CD8-positive, alpha-beta T cell (primary cell): ENCODE measurements at regions of chr4 and their contacts with region 1.

Region 1: DNA sequence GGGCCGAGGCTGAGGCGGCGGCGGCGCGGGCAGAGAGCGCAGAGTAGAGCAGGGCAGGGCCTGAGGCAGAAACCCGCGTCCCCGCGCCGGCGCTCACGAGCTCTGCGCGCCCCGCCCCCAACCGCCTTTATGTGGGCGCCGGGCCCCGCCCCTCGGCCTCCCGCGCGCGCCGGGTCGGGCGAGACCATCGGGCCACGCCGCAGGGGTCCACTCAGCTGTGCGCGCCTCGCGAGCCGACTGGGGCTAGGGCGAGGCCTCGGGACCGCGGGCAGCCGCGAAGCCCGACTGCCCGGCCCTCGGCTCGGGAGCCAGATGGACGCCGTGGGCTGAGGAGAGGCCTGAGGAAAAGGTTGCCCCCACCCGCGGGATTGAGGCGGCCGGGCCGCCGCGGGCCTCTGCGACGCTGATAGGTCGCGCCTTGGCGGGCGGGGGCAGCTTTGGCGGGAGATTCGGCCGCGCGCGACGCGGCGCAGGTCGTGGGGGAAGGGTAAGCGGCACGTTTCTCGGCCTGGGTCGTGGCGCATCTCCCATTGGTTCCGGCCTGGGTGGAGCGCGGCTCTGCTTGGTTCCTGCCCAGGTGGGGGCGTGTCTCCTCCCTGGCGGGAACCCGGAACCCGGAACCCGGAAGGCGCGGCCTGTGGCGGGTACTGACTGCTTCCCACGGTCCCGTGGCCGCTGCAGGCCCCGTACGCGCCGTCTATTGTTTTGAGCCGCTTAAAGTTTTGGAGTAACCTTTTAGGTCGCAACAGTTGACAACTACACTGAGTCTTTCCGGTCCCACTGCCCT is at the start of gene SLBP:
- DNase-seq: peak; percentile 96 to 99 (median 99)
- ATAC-seq: peak; percentile 87
- H3K4me3 ChIP-seq: peak within 1 kb of the TSS; percentile 82 to 95
- H3K4me3 Mint-ChIP-seq: peak within 1 kb of the TSS; percentile 94
- H3K27ac ChIP-seq: peak within 1 kb of the TSS; percentile 95 to 97
- H3K27ac Mint-ChIP-seq: peak within 1 kb of the TSS; percentile 94
- H3K4me1 ChIP-seq: peaks cover 42% of the 10 kb centered on the region
- H3K4me1 Mint-ChIP-seq: peaks cover 60% of the 10 kb centered on the region
- H3K27me3 ChIP-seq: no peaks in the 10 kb centered on the region
- H3K27me3 Mint-ChIP-seq: no peaks in the 10 kb centered on the region
- CTCF ChIP-seq: no peak
- total RNA-seq, gene SLBP: 61.2 to 62.6 TPM

Region 2: GRCh38 chr4:560731-561291 is 1151.6 kb before region 1 on chr4:
- CTCF ChIA-PET with region 1: no interaction called
- POLR2A ChIA-PET with region 1: no interaction called
- intact Hi-C with region 1: no loop called
- DNase-seq: no peak
- ATAC-seq: no peak
- H3K4me3 ChIP-seq: no peak overlapping the region
- H3K4me3 Mint-ChIP-seq: no peak overlapping the region
- H3K27ac ChIP-seq: no peak overlapping the region
- H3K27ac Mint-ChIP-seq: no peak overlapping the region
- H3K4me1 ChIP-seq: no peaks in the 10 kb centered on the region
- H3K4me1 Mint-ChIP-seq: no peaks in the 10 kb centered on the region
- H3K27me3 ChIP-seq: no peaks in the 10 kb centered on the region
- H3K27me3 Mint-ChIP-seq: peaks cover 11% of the 10 kb centered on the region
- CTCF ChIP-seq: no peak

Region 3: GRCh38 chr4:973431-974397 is 738.7 kb before region 1 on chr4 and contains the start of gene DGKQ:
- CTCF ChIA-PET with region 1: no interaction called
- POLR2A ChIA-PET with region 1: no interaction called
- intact Hi-C with region 1: loop called in 1 of 2 experiments (anchors 5 kb)
- DNase-seq: peak; percentile 83 to 95 (median 89)
- ATAC-seq: peak; percentile 82
- H3K4me3 ChIP-seq: peak within 1 kb of the TSS; percentile 74 to 77
- H3K4me3 Mint-ChIP-seq: peak within 1 kb of the TSS; percentile 62
- H3K27ac ChIP-seq: peak within 1 kb of the TSS; percentile 56 to 85
- H3K27ac Mint-ChIP-seq: peak within 1 kb of the TSS; percentile 37
- H3K4me1 ChIP-seq: peaks cover 32% of the 10 kb centered on the region
- H3K4me1 Mint-ChIP-seq: peaks cover 17% of the 10 kb centered on the region
- H3K27me3 ChIP-seq: no peaks in the 10 kb centered on the region
- H3K27me3 Mint-ChIP-seq: no peaks in the 10 kb centered on the region
- CTCF ChIP-seq: no peak
- total RNA-seq, gene DGKQ: 28.2 to 29.7 TPM

Region 4: GRCh38 chr4:1579901-1580691 is 132.3 kb before region 1 on chr4:
- CTCF ChIA-PET with region 1: no interaction called
- POLR2A ChIA-PET with region 1: no interaction called
- intact Hi-C with region 1: loop called (anchors 2 kb)
- DNase-seq: peak; percentile 83 to 96 (median 93)
- ATAC-seq: peak; percentile 82
- H3K4me3 ChIP-seq: peak overlapping the region; percentile 70 to 78
- H3K4me3 Mint-ChIP-seq: peak overlapping the region; percentile 79
- H3K27ac ChIP-seq: peak overlapping the region; percentile 66 to 73
- H3K27ac Mint-ChIP-seq: peak overlapping the region; percentile 79
- H3K4me1 ChIP-seq: no peaks in the 10 kb centered on the region
- H3K4me1 Mint-ChIP-seq: peaks cover 11% of the 10 kb centered on the region
- H3K27me3 ChIP-seq: no peaks in the 10 kb centered on the region
- H3K27me3 Mint-ChIP-seq: no peaks in the 10 kb centered on the region
- CTCF ChIP-seq: no peak

Region 5: DNA sequence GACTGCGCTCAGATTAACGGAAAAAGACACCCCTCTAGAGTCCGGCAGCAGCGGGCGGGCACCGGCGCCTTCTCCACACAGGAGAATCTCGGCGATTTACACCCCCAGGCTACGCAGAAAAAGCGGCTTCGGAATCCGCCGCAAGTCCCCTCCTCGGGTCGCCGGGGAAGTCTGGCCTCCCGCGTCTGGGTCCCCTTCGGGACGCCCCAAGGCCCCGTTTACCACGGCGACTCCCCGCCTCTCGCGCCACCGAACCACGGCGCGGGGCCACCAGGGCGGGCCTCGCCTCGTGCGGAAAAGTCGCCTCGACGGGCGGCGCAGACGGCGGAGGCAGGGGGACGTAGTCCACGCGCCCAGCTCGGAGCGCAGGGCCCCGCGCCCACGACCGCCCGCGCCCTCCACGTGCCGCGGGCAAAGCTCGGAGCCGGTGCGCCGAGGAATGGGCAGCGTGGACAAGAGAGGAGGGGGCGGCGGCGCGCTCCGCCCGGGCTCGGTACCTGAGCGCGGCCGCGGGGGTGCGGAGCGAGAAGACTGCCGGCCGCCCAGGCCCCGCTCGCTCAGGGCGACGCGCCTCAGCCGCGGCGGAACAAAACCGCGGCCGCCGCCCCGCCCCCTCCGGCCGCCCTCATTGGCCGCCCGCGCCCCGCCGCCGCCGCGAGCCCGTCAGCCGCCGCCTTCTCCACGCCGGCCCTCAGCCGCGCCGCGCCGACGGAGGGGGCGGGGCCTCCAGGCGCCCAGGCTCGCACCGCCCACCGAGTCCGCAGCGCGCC is 28.5 kb before region 1 on chr4 and contains the start of gene FAM53A:
- CTCF ChIA-PET with region 1: interaction called, 509 read pairs
- POLR2A ChIA-PET with region 1: interaction called, 9 read pairs
- intact Hi-C with region 1: loop called (anchors 1 kb)
- DNase-seq: peak in 7 of 9 experiments; percentile 7 to 95 (median 43)
- ATAC-seq: peak; percentile 94
- H3K4me3 ChIP-seq: peak within 1 kb of the TSS; percentile 42 to 43
- H3K4me3 Mint-ChIP-seq: peak within 1 kb of the TSS; percentile 89
- H3K27ac ChIP-seq: peak within 1 kb of the TSS in 1 of 2 experiments; percentile 4
- H3K27ac Mint-ChIP-seq: peak within 1 kb of the TSS; percentile 81
- H3K4me1 ChIP-seq: no peaks in the 10 kb centered on the region
- H3K4me1 Mint-ChIP-seq: peaks cover 12% of the 10 kb centered on the region
- H3K27me3 ChIP-seq: no peaks in the 10 kb centered on the region
- H3K27me3 Mint-ChIP-seq: no peaks in the 10 kb centered on the region
- CTCF ChIP-seq: no peak
- total RNA-seq, gene FAM53A: 1.8 to 1.9 TPM

Region 6: GRCh38 chr4:1726146-1726934 is 13.9 kb after region 1 on chr4:
- CTCF ChIA-PET with region 1: interaction called, 20 read pairs
- POLR2A ChIA-PET with region 1: interaction called, 83 read pairs
- intact Hi-C with region 1: loop called (anchors 1 kb)
- DNase-seq: peak; percentile 82 to 96 (median 88)
- ATAC-seq: peak; percentile 32
- H3K4me3 ChIP-seq: no peak overlapping the region
- H3K4me3 Mint-ChIP-seq: peak overlapping the region; percentile 50
- H3K27ac ChIP-seq: no peak overlapping the region
- H3K27ac Mint-ChIP-seq: peak overlapping the region; percentile 80
- H3K4me1 ChIP-seq: peaks cover 58% of the 10 kb centered on the region
- H3K4me1 Mint-ChIP-seq: peaks cover 61% of the 10 kb centered on the region
- H3K27me3 ChIP-seq: no peaks in the 10 kb centered on the region
- H3K27me3 Mint-ChIP-seq: no peaks in the 10 kb centered on the region
- CTCF ChIP-seq: peak; percentile 93

Region 7: GRCh38 chr4:1870578-1871443 is 158.4 kb after region 1 on chr4 and contains the start of gene NSD2:
- CTCF ChIA-PET with region 1: no interaction called
- POLR2A ChIA-PET with region 1: no interaction called
- intact Hi-C with region 1: loop called (anchors 1 kb)
- DNase-seq: peak; percentile 81 to 97 (median 88)
- ATAC-seq: peak; percentile 64
- H3K4me3 ChIP-seq: peak within 1 kb of the TSS; percentile 66 to 98
- H3K4me3 Mint-ChIP-seq: peak within 1 kb of the TSS; percentile 83
- H3K27ac ChIP-seq: peak within 1 kb of the TSS; percentile 81 to 98
- H3K27ac Mint-ChIP-seq: peak within 1 kb of the TSS; percentile 89
- H3K4me1 ChIP-seq: peaks cover 21% of the 10 kb centered on the region
- H3K4me1 Mint-ChIP-seq: peaks cover 31% of the 10 kb centered on the region
- H3K27me3 ChIP-seq: no peaks in the 10 kb centered on the region
- H3K27me3 Mint-ChIP-seq: no peaks in the 10 kb centered on the region
- CTCF ChIP-seq: no peak
- total RNA-seq, gene NSD2: 27.3 to 32.5 TPM